Aorta (tissue), 5 donors: ENCODE measurements at regions of chr12 and their contacts with region 1.

Region 1: DNA sequence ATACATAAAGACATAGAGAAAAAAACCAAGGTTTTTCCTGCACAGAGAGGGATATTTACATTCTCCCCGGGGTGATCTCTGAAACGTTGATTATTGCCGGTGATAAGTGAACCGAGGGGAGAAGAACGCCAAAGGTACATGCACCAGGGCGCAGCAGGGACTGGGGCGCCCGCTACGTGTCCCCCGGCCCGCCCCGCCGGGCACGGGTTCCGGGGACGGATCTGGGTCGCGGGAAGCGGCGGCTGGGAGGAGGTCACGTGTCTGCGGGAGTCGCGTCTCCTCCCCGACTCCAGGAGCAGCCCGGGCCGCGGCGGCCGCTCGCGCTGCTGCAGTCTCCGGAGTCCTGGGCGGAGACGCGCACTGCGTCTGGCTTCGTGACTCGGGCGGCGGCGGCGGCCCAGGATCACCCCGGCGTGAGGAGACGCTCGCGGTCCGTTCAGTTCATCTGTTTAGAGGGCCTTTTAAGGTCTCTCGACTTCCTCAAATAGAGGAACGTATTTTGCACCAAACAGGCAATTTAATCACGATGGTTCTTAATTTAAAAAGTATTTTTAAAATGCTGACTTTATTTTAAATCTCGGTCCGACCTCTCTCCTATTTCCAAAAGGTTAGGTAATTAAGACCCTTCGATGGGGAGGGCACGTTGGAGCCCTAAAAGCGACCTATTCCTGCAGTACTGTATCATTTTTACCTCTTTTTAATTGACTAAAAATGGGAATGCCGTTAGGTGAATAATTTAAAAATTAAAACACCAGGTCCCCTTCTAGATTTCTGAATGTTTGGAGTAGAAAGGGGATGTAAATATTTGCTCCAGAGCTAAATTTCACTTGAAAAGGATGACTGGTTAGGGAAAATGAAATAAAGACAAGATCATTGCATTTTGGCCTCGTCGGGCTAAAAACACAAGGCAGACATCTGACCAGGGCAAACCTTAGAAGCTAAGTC is 1.8 kb upstream of the BHLHE41 start:
- DNase-seq: peak; percentile 94 to 95
- ATAC-seq: peak; percentile 89
- H3K4me3 ChIP-seq: peak overlapping the region; percentile 86 to 96
- H3K27ac ChIP-seq: peak overlapping the region; percentile 91 to 92
- H3K4me1 ChIP-seq: no peaks in the 10 kb centered on the region
- H3K27me3 ChIP-seq: no peaks in the 10 kb centered on the region

Region 2: DNA sequence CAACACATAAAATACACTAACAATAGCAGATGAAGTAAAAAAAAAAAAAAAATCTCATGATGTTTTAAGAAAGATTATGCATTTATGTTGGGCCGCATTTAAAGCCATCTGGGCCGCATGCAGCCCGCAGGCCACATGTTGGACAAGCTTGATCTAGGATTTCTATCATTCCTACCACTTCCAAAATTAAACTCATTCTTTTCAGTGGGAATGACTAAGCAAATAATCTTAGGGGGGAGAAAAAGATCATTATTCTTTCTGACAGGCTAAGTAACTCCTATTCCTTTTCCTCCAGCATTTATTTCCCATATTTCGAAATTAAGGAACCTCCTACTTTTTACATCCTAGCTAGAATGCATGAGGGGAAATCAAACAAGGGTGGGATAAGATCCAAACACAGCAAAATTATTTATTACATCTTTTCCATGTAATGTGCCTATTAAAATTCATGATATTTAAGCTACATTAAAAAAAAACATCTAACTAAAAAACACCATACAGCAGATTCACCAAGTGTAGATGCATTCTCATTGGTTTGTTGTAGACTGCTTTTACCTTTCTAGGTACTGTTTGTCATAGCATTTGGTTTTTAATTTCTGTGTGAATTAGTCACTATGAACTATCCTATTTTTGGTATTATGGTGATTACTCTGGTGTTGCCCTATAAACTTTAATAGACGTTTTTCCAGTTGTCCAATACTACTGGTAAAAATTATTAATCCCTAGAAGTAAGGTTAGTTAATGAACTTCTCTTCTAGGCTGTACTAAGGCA is 92.1 kb before region 1 on chr12:
- intact Hi-C with region 1: no loop called
- DNase-seq: no peak
- ATAC-seq: no peak
- H3K4me3 ChIP-seq: no peak overlapping the region
- H3K27ac ChIP-seq: no peak overlapping the region
- H3K4me1 ChIP-seq: peaks cover 6 to 12% of the 10 kb centered on the region in 2 donors
- H3K27me3 ChIP-seq: no peaks in the 10 kb centered on the region

Region 3: GRCh38 chr12:26143291-26143690 is 16.7 kb after region 1 on chr12:
- intact Hi-C with region 1: no loop called
- DNase-seq: no peak
- ATAC-seq: no peak
- H3K4me3 ChIP-seq: no peak overlapping the region
- H3K27ac ChIP-seq: no peak overlapping the region
- H3K4me1 ChIP-seq: no peaks in the 10 kb centered on the region
- H3K27me3 ChIP-seq: no peaks in the 10 kb centered on the region

Region 4: GRCh38 chr12:26153421-26154154 is 27.0 kb after region 1 on chr12:
- intact Hi-C with region 1: loop called in 1 of 2 experiments (anchors 2 kb)
- DNase-seq: no peak
- ATAC-seq: peak; percentile 75
- H3K4me3 ChIP-seq: no peak overlapping the region
- H3K27ac ChIP-seq: peak overlapping the region; percentile 76 to 88
- H3K4me1 ChIP-seq: peaks cover 5 to 7% of the 10 kb centered on the region in 2 donors
- H3K27me3 ChIP-seq: no peaks in the 10 kb centered on the region

Region 5: DNA sequence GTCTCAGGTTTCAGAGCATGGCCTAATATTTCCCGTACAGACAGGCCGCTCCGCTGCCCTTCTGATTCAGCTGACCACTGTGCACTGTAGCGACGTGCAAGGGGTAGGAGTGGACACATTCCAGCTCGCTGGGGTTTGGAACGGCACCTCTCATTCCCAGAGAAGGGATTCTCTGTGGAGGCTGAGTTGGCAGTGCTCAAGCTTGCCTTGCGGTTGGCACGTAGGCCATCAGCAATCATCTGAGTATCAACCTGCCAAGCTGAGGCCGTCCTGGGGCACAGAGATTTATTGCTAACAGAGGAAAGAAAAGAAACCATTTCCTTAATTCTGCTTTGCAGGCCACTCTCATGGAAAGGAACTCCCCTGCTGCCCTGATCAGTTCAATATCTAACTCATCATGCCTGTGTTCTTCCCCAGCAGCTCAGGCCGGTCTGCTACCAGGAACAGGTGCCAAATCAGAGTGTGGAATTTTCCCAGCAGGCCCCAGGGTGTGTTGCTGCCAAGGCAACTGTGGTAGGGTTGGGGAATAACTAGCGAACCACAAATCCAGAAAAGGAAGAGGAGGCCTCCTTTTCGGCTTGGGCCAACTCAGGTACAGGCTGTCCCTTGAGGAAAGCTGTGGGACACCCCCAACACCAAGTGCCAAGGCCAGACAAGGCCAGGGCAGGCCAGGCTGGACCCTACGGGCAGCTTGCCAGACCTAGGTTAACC is 161.2 kb after region 1 on chr12:
- intact Hi-C with region 1: loop called in 1 of 2 experiments (anchors 5 kb)
- DNase-seq: peak; percentile 82 to 87
- ATAC-seq: peak; percentile 84
- H3K4me3 ChIP-seq: no peak overlapping the region
- H3K27ac ChIP-seq: peak overlapping the region; percentile 23 to 48
- H3K4me1 ChIP-seq: no peaks in the 10 kb centered on the region
- H3K27me3 ChIP-seq: no peaks in the 10 kb centered on the region

Region 6: DNA sequence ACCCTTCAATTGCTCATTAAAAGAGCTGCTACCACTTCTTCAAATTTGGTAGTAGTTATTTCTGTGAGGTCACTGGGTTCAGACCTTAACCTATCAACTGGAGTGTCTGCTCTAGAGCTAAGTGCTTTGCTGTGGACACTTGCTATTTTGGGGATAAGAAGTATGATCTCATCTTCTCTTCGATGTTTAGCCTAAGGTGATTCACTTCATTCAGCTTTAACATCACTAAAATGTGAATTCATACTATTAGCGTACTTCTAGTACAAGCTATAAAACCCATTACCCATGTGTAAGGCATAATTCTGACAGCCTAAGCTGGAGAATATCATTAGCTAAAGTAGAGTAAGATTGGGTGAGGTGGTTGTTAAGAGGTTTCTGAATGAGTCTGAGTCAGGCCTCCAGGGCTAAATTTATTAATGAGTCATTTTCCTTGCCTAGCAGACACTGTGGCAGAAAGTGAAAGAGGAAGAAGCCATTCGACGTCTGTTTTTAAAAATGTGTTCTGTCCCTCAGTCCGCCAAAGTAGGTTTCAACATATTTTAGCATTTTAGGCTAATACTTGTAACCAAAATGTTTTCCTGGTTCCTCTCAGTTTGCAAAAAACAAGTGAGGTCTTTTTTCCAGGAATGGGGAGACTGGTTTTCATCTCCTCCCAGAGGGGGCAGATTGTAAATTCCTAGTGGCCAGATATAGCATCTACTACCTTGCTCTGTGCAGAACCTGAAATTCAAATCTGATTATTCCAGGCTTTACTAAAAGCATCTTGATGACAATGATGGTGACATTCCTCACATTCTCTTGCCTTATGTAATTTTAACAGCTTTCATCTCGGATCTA is 172.4 kb after region 1 on chr12:
- intact Hi-C with region 1: loop called (anchors 5 kb)
- DNase-seq: no peak
- ATAC-seq: peak; percentile 91
- H3K4me3 ChIP-seq: peak overlapping the region in 1 of 2 donors; percentile 54
- H3K27ac ChIP-seq: peak overlapping the region; percentile 67 to 68
- H3K4me1 ChIP-seq: peaks cover 0 to 2% of the 10 kb centered on the region in 2 donors
- H3K27me3 ChIP-seq: no peaks in the 10 kb centered on the region

Region 7: DNA sequence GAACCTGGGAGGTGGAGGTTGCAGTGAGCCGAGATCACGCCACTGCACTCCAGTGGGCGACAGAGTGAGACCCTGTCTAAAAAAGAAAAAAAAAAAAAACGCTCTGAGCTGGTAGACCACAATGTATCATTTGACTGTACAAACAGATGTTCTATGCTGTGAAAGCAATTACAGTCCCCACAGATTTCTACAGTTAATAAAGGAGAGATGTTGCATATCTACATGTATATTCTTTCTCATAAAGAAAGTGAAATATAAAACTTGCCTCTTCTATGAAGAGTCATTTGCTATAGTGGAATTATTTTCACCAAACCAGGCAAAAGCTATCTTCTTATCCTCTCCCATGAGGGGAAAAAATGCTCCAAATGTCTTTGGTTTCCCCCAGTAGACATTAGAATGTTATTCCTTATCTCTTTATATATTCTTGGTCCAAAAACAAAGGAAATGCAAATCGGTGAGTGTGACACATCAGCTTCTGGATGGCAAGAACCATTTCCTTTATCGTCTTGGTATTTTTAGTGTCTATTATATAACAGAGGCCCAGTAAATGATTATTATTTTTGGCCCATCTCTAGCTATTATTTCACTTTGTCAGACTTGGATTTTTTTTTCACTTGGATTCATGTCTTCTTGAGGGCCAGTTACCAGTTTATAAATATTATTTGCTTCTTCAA is 299.1 kb after region 1 on chr12:
- intact Hi-C with region 1: loop called in 1 of 2 experiments (anchors 10 kb)
- DNase-seq: no peak
- ATAC-seq: no peak
- H3K4me3 ChIP-seq: no peak overlapping the region
- H3K27ac ChIP-seq: no peak overlapping the region
- H3K4me1 ChIP-seq: no peaks in the 10 kb centered on the region
- H3K27me3 ChIP-seq: no peaks in the 10 kb centered on the region